CD4-positive, alpha-beta T cell (primary cell): ENCODE measurements at regions of chr2 and their contacts with region 1.

Region 1: GRCh38 chr2:42652086-42652485 is 83.7 kb downstream of the MTA3 start:
- DNase-seq: peak in 10 of 14 experiments; percentile 3 to 68 (median 46)
- ATAC-seq: peak; percentile 83
- H3K4me3 ChIP-seq: no peak overlapping the region
- H3K4me3 Mint-ChIP-seq: peak overlapping the region; percentile 80
- H3K27ac ChIP-seq: peak overlapping the region in 1 of 2 donors; percentile 35
- H3K27ac Mint-ChIP-seq: peak overlapping the region; percentile 79
- H3K4me1 ChIP-seq: peaks cover 18% of the 10 kb centered on the region
- H3K4me1 Mint-ChIP-seq: peaks cover 67% of the 10 kb centered on the region
- H3K27me3 ChIP-seq: no peaks in the 10 kb centered on the region
- H3K27me3 Mint-ChIP-seq: no peaks in the 10 kb centered on the region
- CTCF ChIP-seq: no peak

Region 2: GRCh38 chr2:42639340-42640077 is 12.6 kb before region 1 on chr2:
- CTCF ChIA-PET with region 1: no interaction called
- POLR2A ChIA-PET with region 1: interaction called, 6 read pairs
- intact Hi-C with region 1: loop called in 1 of 2 experiments (anchors 2 kb)
- DNase-seq: no peak
- ATAC-seq: no peak
- H3K4me3 ChIP-seq: no peak overlapping the region
- H3K4me3 Mint-ChIP-seq: peak overlapping the region; percentile 32
- H3K27ac ChIP-seq: no peak overlapping the region
- H3K27ac Mint-ChIP-seq: peak overlapping the region; percentile 60
- H3K4me1 ChIP-seq: no peaks in the 10 kb centered on the region
- H3K4me1 Mint-ChIP-seq: peaks cover 29% of the 10 kb centered on the region
- H3K27me3 ChIP-seq: no peaks in the 10 kb centered on the region
- H3K27me3 Mint-ChIP-seq: no peaks in the 10 kb centered on the region
- CTCF ChIP-seq: no peak

Region 3: GRCh38 chr2:42752314-42752713 is 100.2 kb after region 1 on chr2:
- CTCF ChIA-PET with region 1: no interaction called
- POLR2A ChIA-PET with region 1: no interaction called
- intact Hi-C with region 1: no loop called
- DNase-seq: peak in 3 of 14 experiments; percentile 39 to 64 (median 57)
- ATAC-seq: no peak
- H3K4me3 ChIP-seq: no peak overlapping the region
- H3K4me3 Mint-ChIP-seq: no peak overlapping the region
- H3K27ac ChIP-seq: no peak overlapping the region
- H3K27ac Mint-ChIP-seq: no peak overlapping the region
- H3K4me1 ChIP-seq: peaks cover 4% of the 10 kb centered on the region
- H3K4me1 Mint-ChIP-seq: peaks cover 5% of the 10 kb centered on the region
- H3K27me3 ChIP-seq: no peaks in the 10 kb centered on the region
- H3K27me3 Mint-ChIP-seq: no peaks in the 10 kb centered on the region
- CTCF ChIP-seq: no peak

Region 4: DNA sequence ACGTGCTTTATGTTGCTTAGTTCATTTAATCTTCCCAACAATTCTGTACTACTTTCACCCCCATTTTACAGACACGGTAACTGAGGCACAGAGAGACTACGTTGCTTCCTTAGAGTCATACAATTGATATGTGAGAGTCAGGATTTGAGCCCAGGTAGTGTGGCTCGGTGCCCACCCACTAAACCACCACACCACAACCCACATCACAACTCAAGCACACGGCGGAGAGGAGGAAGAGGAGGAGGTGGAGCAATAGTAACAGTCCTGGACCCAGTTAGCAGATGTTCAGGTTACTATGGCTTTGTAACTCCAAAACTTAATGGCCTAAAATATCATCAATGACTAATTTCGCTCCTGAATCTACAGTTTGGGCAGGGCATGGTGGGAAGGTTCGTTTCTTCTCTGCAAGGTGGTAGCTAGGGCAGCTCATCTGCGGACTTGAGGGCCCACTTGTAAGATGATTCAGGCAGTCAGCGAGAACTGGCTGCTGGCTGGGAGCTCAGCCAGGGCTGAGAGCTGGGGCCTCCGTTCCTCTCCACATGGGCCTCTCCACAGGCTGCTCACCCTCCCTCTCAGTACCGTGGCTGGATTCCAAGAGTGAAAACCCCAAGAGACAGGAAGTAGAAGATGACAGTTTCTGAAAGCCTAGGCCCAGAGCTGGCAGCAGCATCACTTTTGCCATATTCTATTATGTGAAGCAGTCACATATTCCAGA is 407.3 kb after region 1 on chr2:
- CTCF ChIA-PET with region 1: no interaction called
- POLR2A ChIA-PET with region 1: no interaction called
- intact Hi-C with region 1: no loop called
- DNase-seq: peak; percentile 15 to 83 (median 44)
- ATAC-seq: peak; percentile 88
- H3K4me3 ChIP-seq: peak overlapping the region; percentile 2
- H3K4me3 Mint-ChIP-seq: peak overlapping the region; percentile 8
- H3K27ac ChIP-seq: peak overlapping the region; percentile 30 to 75
- H3K27ac Mint-ChIP-seq: peak overlapping the region; percentile 79
- H3K4me1 ChIP-seq: peaks cover 28% of the 10 kb centered on the region
- H3K4me1 Mint-ChIP-seq: peaks cover 44% of the 10 kb centered on the region
- H3K27me3 ChIP-seq: no peaks in the 10 kb centered on the region
- H3K27me3 Mint-ChIP-seq: no peaks in the 10 kb centered on the region
- CTCF ChIP-seq: no peak